Gastrocnemius medialis (tissue), 4 donors: ENCODE measurements at regions of chr4 and their contacts with region 1.

Region 1: DNA sequence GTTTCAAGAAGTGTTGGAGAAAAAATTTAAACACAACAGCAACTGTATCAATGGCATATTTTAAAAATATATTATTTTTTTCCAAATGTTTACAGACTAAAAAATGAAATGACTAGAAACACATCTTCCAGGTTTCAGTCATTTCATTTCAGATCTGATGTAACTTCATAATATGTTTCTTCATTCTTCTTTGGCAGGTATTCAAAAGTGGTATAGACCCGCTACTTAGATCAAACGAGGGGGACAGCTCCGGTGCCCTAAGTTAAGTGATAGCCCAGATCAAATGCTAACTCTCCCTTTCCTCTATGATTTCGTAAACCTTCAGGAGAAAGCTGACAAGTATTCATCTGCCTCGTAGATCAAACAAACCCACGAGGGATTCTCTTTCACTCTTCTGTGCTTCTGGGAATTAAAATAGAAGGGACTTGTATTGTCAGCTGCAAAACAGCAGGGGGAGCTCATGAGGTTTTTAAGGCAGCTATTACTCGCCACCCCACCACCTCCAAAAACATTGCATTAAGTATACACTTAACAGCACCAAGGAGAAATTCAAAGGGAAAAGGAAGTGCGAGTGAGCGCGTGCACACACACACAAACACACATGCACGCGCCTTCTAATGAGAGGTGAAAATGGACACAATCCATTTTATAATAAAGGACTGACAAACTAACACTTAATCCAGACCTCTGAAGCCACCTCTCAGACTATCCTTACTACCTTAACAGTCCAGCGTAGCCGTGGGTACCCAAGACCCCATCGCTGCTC is 21.4 kb downstream of the HELT start:
- DNase-seq: peak; percentile 27 to 38
- ATAC-seq: peak; percentile 89 to 95
- H3K4me3 ChIP-seq: peak overlapping the region in 2 of 4 donors; percentile 20 to 34
- H3K27ac ChIP-seq: no peak overlapping the region
- H3K4me1 ChIP-seq: no peaks in the 10 kb centered on the region
- H3K27me3 ChIP-seq: no peaks in the 10 kb centered on the region
- CTCF ChIP-seq: peak; percentile 71 to 87 (median 84)
- POLR2A ChIP-seq: no peak

Region 2: GRCh38 chr4:185096032-185096653 is 56.5 kb after region 1 on chr4:
- in situ Hi-C with region 1: no loop called
- intact Hi-C with region 1: loop called (anchors 5 kb)
- DNase-seq: no peak
- ATAC-seq: peak in 1 of 2 donors; percentile 68
- H3K4me3 ChIP-seq: no peak overlapping the region
- H3K27ac ChIP-seq: no peak overlapping the region
- H3K4me1 ChIP-seq: no peaks in the 10 kb centered on the region
- H3K27me3 ChIP-seq: no peaks in the 10 kb centered on the region
- CTCF ChIP-seq: peak; percentile 29 to 67 (median 41)
- POLR2A ChIP-seq: no peak

Region 3: DNA sequence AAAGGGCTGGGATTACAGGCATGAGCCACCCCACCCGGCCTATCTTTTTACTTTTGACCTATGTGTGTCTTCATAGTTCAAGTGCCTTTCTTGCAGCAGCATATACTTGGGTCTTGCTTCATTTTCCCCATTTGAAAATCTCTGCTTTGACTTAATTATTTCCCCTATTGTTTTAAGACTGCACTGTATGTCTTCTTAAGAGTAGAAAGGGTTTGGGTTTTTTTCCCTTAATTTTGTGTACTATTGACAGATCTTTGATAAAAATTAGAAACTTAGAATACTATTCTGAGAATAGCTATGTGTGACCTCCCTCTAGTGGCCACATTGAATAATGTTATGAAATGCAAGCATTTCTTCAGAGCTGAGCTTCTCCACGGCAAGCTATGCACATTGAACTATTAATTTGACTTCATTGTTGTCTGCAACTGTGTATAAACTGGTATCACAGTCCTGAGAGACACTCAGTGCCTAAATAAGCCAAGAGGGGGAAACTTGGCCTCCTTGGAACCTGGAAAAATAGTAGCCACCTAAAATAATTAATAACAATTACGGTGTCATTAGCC is 94.7 kb after region 1 on chr4:
- in situ Hi-C with region 1: loop called (anchors 5 to 10 kb)
- intact Hi-C with region 1: loop called (anchors 1 kb)
- DNase-seq: no peak
- ATAC-seq: peak; percentile 71 to 83
- H3K4me3 ChIP-seq: no peak overlapping the region
- H3K27ac ChIP-seq: peak overlapping the region in 2 of 4 donors; percentile 35 to 44
- H3K4me1 ChIP-seq: peaks cover 2 to 12% of the 10 kb centered on the region in 2 donors
- H3K27me3 ChIP-seq: no peaks in the 10 kb centered on the region
- CTCF ChIP-seq: peak; percentile 75 to 89 (median 77)
- POLR2A ChIP-seq: no peak

Region 4: GRCh38 chr4:185183619-185184281 is 144.1 kb after region 1 on chr4:
- in situ Hi-C with region 1: no loop called
- intact Hi-C with region 1: loop called (anchors 2 kb)
- DNase-seq: peak; percentile 71 to 73
- ATAC-seq: peak; percentile 77 to 86
- H3K4me3 ChIP-seq: no peak overlapping the region
- H3K27ac ChIP-seq: peak overlapping the region in 1 of 4 donors; percentile 10
- H3K4me1 ChIP-seq: peaks cover 0 to 6% of the 10 kb centered on the region in 2 donors
- H3K27me3 ChIP-seq: no peaks in the 10 kb centered on the region
- CTCF ChIP-seq: peak; percentile 63 to 86 (median 73)
- POLR2A ChIP-seq: no peak